HCT116 (cell line): ENCODE measurements at regions of chr1 and their contacts with region 1.

Region 1: DNA sequence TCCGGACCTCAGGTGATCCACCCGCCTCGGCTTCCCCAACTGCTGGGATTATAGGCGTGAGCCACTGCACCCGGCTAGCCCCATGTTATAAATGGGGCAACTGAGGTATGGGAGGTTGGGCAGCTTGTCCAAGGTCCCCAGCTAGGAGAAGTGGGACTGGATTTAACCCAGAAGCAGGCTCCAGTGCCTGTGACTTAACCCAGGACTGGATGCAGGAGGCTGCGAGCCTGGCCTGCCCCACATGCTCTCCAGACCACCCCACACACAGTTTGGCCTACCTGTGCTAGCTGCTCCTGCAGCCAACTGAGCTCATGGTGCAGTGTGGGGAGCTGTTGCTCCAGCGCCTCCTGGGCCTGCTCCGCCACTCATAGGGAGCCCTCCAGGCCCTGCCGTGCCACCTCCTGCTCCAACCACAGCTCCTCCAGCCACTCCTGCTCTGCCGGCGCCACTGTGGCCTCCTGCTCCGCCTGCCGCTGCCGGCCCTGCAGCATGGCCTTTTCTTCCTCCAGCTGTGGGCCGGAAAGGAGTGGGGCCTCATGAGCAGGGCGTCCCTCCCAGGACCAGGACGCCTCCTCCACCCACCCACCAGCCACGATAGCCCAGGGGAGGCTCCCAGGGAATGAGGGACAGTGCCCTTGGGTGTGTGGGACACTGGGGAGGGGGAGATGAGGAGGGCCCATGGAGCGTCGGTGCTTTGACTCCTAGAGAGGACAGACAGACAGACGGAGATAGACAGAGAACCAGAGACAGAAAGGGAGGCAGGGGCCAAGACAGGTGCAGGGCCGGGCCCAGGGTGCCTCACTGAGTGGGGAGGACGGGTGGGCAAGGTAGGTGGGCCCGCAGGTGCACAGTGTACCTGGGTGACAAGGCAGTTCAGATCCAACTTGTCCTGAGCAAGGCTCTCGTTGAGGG is 12.4 kb upstream of the NBPF1 start:
- DNase-seq: no peak
- ATAC-seq: no peak
- H3K4me3 ChIP-seq: no peak overlapping the region
- H3K27ac ChIP-seq: no peak overlapping the region
- H3K4me1 ChIP-seq: peaks cover 0 to 8% of the 10 kb centered on the region in 2 experiments; a peak in 2 of 4 replicates
- H3K27me3 ChIP-seq: no peaks in the 10 kb centered on the region
- CTCF ChIP-seq: 0 out of 6 replicates have a peak, but pooled peaks of 1 of the 3 experiments have one; percentile 1
- POLR2A ChIP-seq: no peak
- RAD21 ChIP-seq: no peak

Region 2: DNA sequence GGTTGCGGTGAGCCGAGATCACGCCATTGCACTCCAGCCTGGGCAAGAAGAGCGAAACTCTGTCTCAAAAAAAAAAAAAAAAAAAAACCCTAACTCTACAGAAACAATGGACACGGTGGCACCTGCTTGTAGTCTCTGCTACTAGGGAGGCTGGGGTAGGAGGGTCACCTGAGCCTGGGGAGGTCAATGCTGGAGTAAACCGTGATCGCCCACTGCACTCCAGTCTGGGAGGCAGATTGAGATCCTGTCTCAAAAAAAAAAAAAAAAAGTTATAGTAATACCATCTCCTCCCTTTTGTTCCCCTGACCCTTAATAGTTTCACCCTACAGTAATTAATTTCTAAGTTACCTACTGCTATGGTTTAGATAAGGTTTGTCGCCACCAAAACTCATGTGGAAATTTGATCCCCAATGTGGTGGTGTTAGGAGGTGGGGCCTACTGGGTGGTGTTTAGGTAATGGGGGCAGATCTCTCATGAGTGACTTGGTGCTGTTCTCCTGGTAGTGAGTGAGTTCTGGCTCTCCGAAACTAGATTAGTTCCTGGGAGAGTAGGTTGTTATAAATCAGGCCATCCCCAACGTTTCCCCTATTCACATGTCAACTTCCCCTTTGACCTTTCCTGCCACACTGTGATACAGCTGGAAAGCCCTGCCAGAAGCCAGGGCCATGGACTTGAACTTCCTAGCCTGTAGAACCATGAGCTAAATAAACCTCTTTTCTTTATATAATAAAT is 283.3 kb before region 1 on chr1:
- CTCF ChIA-PET with region 1: no interaction called
- POLR2A ChIA-PET with region 1: no interaction called
- RAD21 ChIA-PET with region 1: no interaction called
- intact Hi-C with region 1: no loop called
- DNase-seq: no peak
- ATAC-seq: no peak
- H3K4me3 ChIP-seq: no peak overlapping the region
- H3K27ac ChIP-seq: no peak overlapping the region
- H3K4me1 ChIP-seq: no peaks in the 10 kb centered on the region
- H3K27me3 ChIP-seq: no peaks in the 10 kb centered on the region
- CTCF ChIP-seq: no peak
- POLR2A ChIP-seq: no peak
- RAD21 ChIP-seq: no peak

Region 3: GRCh38 chr1:16440470-16441281 is 185.1 kb before region 1 on chr1 and contains the start of gene NECAP2:
- CTCF ChIA-PET with region 1: interaction called, 17 read pairs
- POLR2A ChIA-PET with region 1: no interaction called
- RAD21 ChIA-PET with region 1: interaction called in 1 of 2 experiments, 3 read pairs
- intact Hi-C with region 1: no loop called
- DNase-seq: peak; percentile 88
- ATAC-seq: peak; percentile 95
- H3K4me3 ChIP-seq: peak within 1 kb of the TSS; percentile 99 to 100
- H3K27ac ChIP-seq: peak within 1 kb of the TSS; percentile 79
- H3K4me1 ChIP-seq: peaks cover 4 to 13% of the 10 kb centered on the region in 2 experiments; a peak in 3 of 4 replicates
- H3K27me3 ChIP-seq: no peaks in the 10 kb centered on the region
- CTCF ChIP-seq: peak; percentile 52 to 90 (median 73)
- POLR2A ChIP-seq: peak; percentile 87
- RAD21 ChIP-seq: peak; percentile 62
- total RNA-seq, gene NECAP2: 35.5 TPM

Region 4: DNA sequence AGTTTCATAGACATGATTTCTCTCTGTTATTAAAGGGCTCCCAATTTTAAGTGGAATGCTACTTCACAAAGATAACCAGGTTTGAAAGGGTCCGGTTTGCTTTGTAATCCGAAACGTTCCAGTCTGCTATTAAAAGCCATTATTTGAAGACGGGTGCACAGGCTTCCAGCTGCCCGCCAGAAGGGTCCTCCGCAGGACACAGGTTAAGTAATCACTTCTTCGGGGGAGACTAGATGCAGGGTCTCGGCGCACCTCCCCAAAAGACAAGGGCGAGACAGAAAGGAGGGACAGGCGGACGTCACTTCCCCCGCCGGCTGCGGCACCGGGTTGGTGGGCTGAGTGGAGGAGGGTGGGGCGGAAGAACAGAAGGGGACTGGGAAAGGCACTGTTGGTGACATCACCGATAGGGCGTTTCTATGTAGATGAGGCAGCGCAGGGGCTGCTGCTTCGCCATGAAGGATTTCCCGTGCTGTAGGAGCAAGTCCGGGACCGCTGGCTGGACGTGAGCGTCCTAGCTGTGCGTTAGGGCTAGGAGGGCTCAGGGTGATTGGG is 278.9 kb after region 1 on chr1:
- CTCF ChIA-PET with region 1: interaction called, 15 read pairs
- POLR2A ChIA-PET with region 1: interaction called, 41 read pairs
- RAD21 ChIA-PET with region 1: interaction called in 1 of 2 experiments, 3 read pairs
- intact Hi-C with region 1: no loop called
- DNase-seq: peak; percentile 97
- ATAC-seq: peak; percentile 92
- H3K4me3 ChIP-seq: peak overlapping the region; percentile 45 to 55
- H3K27ac ChIP-seq: peak overlapping the region; percentile 89
- H3K4me1 ChIP-seq: peaks cover 22 to 52% of the 10 kb centered on the region in 2 experiments
- H3K27me3 ChIP-seq: no peaks in the 10 kb centered on the region
- CTCF ChIP-seq: no peak
- POLR2A ChIP-seq: no peak
- RAD21 ChIP-seq: no peak

Region 5: GRCh38 chr1:16946646-16947045 is 320.9 kb after region 1 on chr1:
- CTCF ChIA-PET with region 1: interaction called, 34 read pairs
- POLR2A ChIA-PET with region 1: interaction called, 9 read pairs
- RAD21 ChIA-PET with region 1: interaction called in 1 of 2 experiments, 3 read pairs
- intact Hi-C with region 1: loop called (anchors 2 kb)
- DNase-seq: no peak
- ATAC-seq: no peak
- H3K4me3 ChIP-seq: no peak overlapping the region
- H3K27ac ChIP-seq: no peak overlapping the region
- H3K4me1 ChIP-seq: no peaks in the 10 kb centered on the region; a peak in 1 of 4 replicates
- H3K27me3 ChIP-seq: no peaks in the 10 kb centered on the region
- CTCF ChIP-seq: no peak
- POLR2A ChIP-seq: no peak
- RAD21 ChIP-seq: no peak

Region 6: GRCh38 chr1:17045634-17046333 is 420.0 kb after region 1 on chr1:
- CTCF ChIA-PET with region 1: interaction called, 10 read pairs
- POLR2A ChIA-PET with region 1: no interaction called
- RAD21 ChIA-PET with region 1: no interaction called
- intact Hi-C with region 1: no loop called
- DNase-seq: peak; percentile 49
- ATAC-seq: peak; percentile 68; the same call in 1 of the 2 replicates
- H3K4me3 ChIP-seq: no peak overlapping the region
- H3K27ac ChIP-seq: no peak overlapping the region
- H3K4me1 ChIP-seq: no peaks in the 10 kb centered on the region
- H3K27me3 ChIP-seq: no peaks in the 10 kb centered on the region
- CTCF ChIP-seq: peak; percentile 67 to 93 (median 72)
- POLR2A ChIP-seq: no peak
- RAD21 ChIP-seq: peak; percentile 92